ENCODE measurements at regions of chr5 and their contacts with region 1.

Region 1: GRCh38 chr5:122192497-122193496 is 63.5 kb downstream of the ZNF474 start:
- DNase-seq: peak; percentile 26
- CTCF ChIP-seq: peak; percentile 71

Region 2: DNA sequence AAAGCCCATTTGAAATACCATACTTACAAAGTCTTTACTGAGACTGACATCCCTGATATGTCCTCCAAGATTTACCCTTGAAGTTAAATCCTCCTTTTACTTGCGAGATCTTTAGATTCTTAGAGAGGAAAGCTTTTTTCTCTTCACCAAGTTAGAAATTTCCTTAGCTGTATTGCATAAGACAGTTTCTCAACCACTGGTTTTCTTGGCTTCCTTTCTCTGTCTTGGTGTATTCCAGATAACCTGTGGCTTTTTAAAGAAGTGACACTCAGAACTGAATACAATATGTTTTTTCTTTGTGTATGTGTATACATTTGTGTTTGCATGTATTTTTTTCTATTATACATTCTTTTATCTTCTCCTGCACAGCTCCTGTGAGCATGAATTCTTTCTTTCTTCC is 184.2 kb after region 1 on chr5:
- CTCF ChIA-PET with region 1: no interaction called
- POLR2A ChIA-PET with region 1: no interaction called
- DNase-seq: no peak
- CTCF ChIP-seq: no peak

Region 3: GRCh38 chr5:122404018-122404417 is 211.2 kb after region 1 on chr5:
- CTCF ChIA-PET with region 1: interaction called, 11 read pairs
- POLR2A ChIA-PET with region 1: no interaction called
- DNase-seq: no peak
- CTCF ChIP-seq: no peak

Region 4: GRCh38 chr5:122415030-122415800 is 222.4 kb after region 1 on chr5:
- CTCF ChIA-PET with region 1: interaction called, 81 read pairs
- POLR2A ChIA-PET with region 1: no interaction called
- DNase-seq: peak; percentile 47
- CTCF ChIP-seq: peak; percentile 90

Region 5: DNA sequence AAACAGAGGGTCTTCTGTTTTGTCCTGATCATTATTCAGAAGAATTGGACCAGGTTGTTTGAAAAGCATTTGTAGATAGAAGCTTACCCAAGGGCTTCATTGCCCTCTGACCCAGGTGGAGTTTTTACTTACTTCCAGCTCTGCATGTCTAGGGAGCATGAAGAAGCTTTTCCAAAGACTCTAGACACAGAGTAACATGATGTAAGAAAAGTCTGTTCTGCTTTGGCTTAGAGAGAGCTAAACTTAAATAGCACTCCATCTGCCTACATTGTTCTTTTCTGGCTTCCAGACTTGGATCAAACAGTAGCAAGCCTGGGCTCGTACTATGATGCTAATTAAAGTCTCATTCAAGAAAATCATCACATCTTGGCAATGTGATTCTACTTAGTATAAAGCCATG is 231.3 kb after region 1 on chr5:
- CTCF ChIA-PET with region 1: interaction called, 14 read pairs
- POLR2A ChIA-PET with region 1: no interaction called
- DNase-seq: no peak
- CTCF ChIP-seq: no peak